Caco-2 (cell line): ENCODE measurements at regions of chr4 and their contacts with region 1.

Region 1: DNA sequence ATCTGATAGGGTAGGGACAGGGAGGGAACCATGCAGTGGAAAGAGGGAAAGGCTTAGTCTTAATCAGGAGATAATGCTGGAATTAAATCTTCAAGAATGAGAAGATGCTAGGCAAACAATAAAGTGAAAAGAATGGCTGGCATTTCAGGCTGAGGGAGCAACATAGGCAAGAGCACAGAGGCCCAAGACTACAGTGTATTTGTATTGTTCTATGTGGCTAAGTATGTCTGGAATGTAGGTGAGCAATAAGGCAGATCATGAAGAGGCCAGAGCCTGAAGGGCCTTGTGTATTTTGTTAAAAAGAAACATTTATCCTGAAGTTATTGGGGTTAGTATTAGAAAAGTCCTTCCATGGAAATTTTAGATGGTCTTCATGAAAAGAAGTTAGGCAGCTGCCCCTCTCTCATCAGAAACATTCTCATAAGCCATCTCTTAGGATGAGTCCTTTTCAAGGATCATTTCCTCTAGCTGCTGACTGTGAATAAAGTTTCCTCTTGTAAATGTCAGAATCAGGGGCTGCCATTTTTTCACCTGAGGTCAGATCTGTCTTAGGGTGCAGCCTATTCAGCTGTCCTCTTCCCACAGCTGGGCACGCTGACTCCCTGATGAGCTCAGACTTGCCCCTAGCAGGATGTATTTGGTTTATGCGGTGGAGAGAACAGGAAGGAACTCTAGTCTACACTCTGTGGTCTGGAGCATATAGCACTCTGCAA is 46.3 kb downstream of the ATP10D start:
- DNase-seq: peak; percentile 44 to 48
- H3K4me3 ChIP-seq: no peak overlapping the region
- H3K4me3 Mint-ChIP-seq: peak overlapping the region; percentile 3
- H3K27ac Mint-ChIP-seq: peak overlapping the region; percentile 76
- H3K4me1 ChIP-seq: peaks cover 28% of the 10 kb centered on the region
- H3K4me1 Mint-ChIP-seq: peaks cover 28% of the 10 kb centered on the region
- H3K27me3 ChIP-seq: no peaks in the 10 kb centered on the region
- H3K27me3 Mint-ChIP-seq: no peaks in the 10 kb centered on the region
- CTCF ChIP-seq: no peak

Region 2: DNA sequence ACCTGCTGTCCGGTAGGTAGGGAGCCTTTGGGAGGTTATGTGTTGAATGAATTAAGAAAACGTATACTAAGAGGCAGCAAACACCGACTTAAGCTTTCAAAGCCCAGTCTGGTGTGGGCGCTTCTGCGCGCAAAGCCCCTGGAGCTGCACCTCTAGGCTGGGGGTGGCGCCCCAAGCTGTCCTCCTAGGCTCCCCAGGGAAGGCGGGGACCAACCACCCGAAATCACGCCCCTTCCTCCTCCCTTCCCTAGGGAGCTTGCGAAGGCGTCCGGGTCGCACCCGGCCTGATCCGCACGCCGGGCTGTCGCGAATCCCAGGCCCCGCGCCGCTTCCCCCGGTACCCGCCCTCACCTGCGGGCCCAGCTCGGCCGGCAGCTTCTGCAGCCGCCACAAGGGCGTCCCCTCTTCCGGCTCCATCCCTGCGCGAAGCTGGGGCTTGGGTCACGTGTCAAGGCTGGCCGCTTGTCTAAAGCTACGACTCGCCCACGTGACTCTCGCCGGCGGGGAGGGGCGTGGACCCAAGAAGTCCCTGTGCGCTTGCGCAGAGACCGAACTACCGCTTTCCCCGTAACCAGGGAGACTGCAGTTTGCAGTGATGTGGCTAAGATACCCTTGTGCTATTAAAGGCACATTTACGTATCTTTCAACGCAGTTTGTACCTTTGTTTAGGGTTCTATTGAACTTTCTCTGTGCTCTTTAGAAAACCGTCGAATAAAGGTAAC is 68.0 kb before region 1 on chr4 and contains the start of gene COMMD8:
- CTCF ChIA-PET with region 1: interaction called, 3 read pairs
- POLR2A ChIA-PET with region 1: no interaction called
- intact Hi-C with region 1: loop called (anchors 2 kb)
- DNase-seq: peak; percentile 96 to 97
- H3K4me3 ChIP-seq: peak within 1 kb of the TSS; percentile 67
- H3K4me3 Mint-ChIP-seq: peak within 1 kb of the TSS; percentile 87
- H3K27ac Mint-ChIP-seq: peak within 1 kb of the TSS; percentile 85
- H3K4me1 ChIP-seq: peaks cover 7% of the 10 kb centered on the region
- H3K4me1 Mint-ChIP-seq: peaks cover 20% of the 10 kb centered on the region
- H3K27me3 ChIP-seq: no peaks in the 10 kb centered on the region
- H3K27me3 Mint-ChIP-seq: no peaks in the 10 kb centered on the region
- CTCF ChIP-seq: peak; percentile 4 to 14
- total RNA-seq, gene COMMD8: 34.9 and 38.8 TPM in 2 replicates

Region 3: DNA sequence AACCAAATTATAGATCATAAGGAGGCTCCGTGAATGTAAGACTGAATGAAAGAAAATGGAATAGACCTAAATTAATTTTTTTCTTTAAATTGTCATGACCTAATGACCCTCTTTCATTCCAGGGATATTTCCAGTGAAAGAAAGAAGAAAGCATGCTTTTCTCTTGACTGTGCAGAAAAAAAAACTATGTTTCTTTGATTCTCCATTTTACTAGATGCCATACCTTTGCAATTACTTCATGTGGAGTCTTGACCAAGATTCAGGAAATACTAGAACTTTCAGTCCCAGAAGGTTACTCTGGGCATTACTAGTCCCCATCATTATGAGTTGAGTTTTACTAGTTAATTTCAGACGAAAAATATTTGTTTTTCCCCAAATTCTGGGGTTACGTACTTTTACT is 61.4 kb before region 1 on chr4:
- CTCF ChIA-PET with region 1: no interaction called
- POLR2A ChIA-PET with region 1: no interaction called
- intact Hi-C with region 1: loop called (anchors 1 kb)
- DNase-seq: no peak
- H3K4me3 ChIP-seq: no peak overlapping the region
- H3K4me3 Mint-ChIP-seq: no peak overlapping the region
- H3K27ac Mint-ChIP-seq: no peak overlapping the region
- H3K4me1 ChIP-seq: peaks cover 61% of the 10 kb centered on the region
- H3K4me1 Mint-ChIP-seq: peaks cover 34% of the 10 kb centered on the region
- H3K27me3 ChIP-seq: no peaks in the 10 kb centered on the region
- H3K27me3 Mint-ChIP-seq: no peaks in the 10 kb centered on the region
- CTCF ChIP-seq: no peak